AG04449 (cell line): ENCODE measurements at regions of chr1 and their contacts with region 1.

Region 1: GRCh38 chr1:172002725-172003345 is 161.5 kb downstream of the DNM3 start:
- DNase-seq: no peak
- H3K4me3 ChIP-seq: no peak overlapping the region
- CTCF ChIP-seq: peak; percentile 56

Region 2: DNA sequence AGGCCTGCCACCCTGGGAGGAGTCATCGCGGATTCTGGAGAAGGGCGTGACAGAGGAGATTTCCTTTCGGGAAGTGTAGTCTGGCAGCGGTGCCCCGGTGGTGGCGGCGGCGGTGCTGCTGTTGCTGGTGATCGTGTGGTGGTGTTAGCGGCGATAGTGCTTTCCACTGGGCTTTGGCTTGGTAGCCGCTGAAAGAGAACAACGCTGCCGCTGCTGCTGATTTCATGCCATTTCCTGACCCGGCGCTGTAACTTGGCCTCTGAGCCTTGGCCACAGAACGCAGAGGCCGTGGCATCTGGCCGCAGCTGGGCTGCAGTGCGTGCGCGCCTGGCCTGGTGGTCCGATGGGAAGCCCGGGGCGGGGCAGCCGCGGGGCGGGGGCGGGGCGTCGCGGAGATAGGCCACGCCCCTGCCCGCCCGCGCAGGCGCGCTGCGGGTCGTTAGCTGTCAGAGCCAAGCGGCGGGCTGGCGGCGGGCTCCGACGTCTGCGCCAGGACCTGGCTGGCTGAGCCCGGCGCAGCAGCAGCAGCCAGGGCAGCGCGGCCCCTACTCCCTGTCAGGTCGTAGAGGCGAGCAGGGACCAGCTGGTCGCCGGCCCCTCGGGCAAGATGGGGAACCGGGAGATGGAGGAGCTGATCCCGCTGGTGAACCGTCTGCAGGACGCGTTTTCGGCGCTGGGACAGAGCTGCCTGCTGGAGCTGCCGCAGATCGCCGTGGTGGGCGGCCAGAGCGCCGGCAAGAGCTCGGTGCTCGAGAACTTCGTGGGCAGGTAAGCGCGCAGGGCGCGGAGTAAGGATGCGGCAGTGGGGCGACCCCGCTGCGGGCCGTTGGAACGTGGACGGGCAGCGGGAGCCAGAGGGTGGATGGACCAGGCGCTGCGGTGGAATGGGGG is 161.5 kb before region 1 on chr1 and contains the start of gene DNM3:
- CTCF ChIA-PET with region 1: no interaction called
- POLR2A ChIA-PET with region 1: no interaction called
- DNase-seq: no peak
- H3K4me3 ChIP-seq: peak within 1 kb of the TSS; percentile 75
- CTCF ChIP-seq: no peak

Region 3: GRCh38 chr1:172024516-172024915 is 21.7 kb after region 1 on chr1:
- CTCF ChIA-PET with region 1: interaction called, 25 read pairs
- POLR2A ChIA-PET with region 1: no interaction called
- DNase-seq: no peak
- H3K4me3 ChIP-seq: no peak overlapping the region
- CTCF ChIP-seq: no peak

Region 4: DNA sequence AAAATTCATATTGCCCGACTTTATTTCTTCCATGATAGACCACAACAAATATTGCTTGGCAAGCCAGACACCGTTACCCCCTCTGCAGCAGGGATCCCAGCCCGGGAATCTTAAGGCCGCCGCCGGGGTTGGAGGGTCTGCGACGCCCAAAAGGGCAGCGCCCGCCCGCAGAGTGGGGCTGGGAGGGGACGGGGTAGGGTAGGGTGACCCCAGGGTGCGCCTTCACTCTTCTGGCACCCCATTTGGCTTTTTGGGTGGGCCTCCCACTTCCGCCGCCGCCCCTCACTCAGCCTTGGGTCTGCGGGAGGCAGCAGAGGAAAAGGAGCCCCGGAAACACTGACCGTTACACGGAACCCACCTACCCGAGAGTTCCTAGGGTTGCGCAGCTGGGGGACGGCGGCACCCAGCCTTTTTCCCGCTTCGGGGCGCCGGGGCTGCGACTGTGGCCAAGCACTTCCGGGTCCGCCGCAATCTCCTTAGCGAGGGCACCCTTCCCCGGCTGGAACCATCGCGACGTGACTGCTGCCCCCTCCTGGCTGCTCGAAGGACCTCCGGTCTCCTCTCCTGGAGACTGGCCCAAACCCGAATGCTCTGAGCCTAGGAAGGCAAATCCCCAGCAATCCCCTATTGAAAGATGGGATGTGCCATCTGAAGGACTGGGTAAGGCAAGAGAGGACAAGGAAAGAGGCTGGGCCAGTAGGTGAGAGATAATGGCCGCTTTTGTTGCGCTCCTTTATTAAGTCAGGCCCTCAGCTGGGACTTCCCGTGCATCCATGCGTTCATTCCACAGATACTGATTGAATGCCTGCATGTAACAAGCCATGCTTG is 441.0 kb after region 1 on chr1 and contains the start of gene PIGC:
- CTCF ChIA-PET with region 1: interaction called, 77 read pairs
- POLR2A ChIA-PET with region 1: no interaction called
- DNase-seq: no peak
- H3K4me3 ChIP-seq: peak within 1 kb of the TSS; percentile 89
- CTCF ChIP-seq: peak; percentile 98